A549 (cell line): ENCODE measurements at regions of chr20 and their contacts with region 1.

Region 1: DNA sequence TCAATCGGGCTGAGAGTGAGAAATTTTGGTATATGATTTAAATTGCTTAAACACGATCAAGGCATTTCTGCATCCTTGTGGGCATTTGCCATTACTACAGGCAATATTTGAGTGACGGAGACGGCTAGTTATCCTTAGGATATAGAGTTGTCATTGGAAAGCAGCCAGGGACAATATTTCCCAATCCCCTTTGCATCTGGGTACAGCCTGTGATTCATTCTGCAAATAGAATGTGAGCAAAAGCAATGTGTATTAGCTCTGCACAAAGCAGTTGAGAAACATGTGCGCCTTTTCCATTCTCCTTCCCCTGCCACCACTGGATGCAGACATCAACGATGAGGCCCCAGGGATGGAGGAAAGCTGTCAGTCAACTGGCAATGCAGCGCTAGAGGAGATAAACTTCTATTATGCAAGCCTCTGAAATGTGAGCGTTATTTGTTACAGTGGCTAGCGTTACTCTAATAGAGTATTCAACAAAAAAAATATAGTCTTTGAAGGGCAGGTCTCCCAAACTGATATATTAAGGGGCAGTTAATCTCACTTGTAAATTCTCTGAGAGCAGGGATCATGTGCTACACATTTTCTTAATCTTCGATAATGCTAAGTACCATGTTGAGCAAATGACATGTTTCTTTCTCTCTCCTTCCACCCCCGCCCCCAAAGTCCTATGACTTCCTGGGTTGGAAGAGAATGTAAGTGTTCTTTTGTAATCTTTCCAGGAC is 37.1 kb upstream of the NCOA3 start:
- DNase-seq: peak; percentile 97 to 99
- ATAC-seq: peak; percentile 97 to 98
- H3K4me3 ChIP-seq: no peak overlapping the region
- H3K27ac ChIP-seq: peak overlapping the region; percentile 88 to 95
- H3K4me1 ChIP-seq: peaks cover 46% of the 10 kb centered on the region
- CTCF ChIP-seq: no peak; the same call in 1 of the 3 replicates
- EP300 ChIP-seq: peak; percentile 93 to 96
- POLR2A ChIP-seq: no peak
- RAD21 ChIP-seq: peak; percentile 71 to 83

Region 2: DNA sequence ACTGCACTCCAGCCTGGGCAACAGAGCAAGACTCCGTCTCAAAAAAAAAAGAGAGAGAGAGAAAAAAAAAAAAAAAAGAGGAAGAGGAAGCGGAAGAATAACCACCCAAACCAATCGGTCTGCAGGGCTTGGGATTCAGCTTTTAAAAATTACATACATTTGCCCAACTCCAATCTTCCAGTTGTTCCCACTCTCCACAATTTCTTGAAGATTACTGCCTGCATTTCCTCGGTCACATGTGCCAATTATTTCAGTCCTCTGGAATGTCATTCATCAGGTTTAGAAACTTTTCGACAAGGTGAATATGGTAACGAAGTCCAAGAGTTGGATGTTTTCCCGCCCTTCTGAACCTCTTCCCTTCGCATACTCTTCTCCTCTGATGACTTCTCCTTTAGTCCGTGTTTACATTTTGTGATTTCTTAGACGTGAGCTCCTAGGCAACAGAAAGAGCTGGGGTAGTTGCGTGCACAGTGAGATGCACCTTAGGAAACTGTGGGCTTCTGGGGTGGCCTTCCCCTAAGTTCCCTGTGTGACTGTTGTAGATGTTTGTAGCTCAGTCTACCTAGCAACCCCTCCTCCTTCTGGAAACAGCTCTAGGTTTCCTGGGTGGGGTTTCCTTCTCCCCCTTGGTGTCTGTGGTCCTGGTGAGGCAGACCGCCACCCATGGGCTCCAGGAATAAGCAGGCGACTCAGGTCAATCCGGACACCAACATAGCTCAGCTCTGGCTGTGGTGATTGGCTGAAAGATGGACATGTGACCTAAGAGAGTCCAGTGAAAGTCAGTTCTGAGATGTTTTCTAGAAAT is 25.8 kb before region 1 on chr20:
- CTCF ChIA-PET with region 1: interaction called, 11 read pairs
- POLR2A ChIA-PET with region 1: no interaction called
- DNase-seq: peak in 1 of 2 experiments; percentile 62
- ATAC-seq: peak in 1 of 2 experiments; percentile 55; a peak in 3 of 6 replicates
- H3K4me3 ChIP-seq: no peak overlapping the region
- H3K27ac ChIP-seq: peak overlapping the region; percentile 48 to 72; a peak in 5 of 6 replicates
- H3K4me1 ChIP-seq: peaks cover 23% of the 10 kb centered on the region
- CTCF ChIP-seq: no peak
- EP300 ChIP-seq: no peak
- POLR2A ChIP-seq: no peak
- RAD21 ChIP-seq: no peak